HCT116 (cell line): ENCODE measurements at regions of chr1 and their contacts with region 1.

Region 1: DNA sequence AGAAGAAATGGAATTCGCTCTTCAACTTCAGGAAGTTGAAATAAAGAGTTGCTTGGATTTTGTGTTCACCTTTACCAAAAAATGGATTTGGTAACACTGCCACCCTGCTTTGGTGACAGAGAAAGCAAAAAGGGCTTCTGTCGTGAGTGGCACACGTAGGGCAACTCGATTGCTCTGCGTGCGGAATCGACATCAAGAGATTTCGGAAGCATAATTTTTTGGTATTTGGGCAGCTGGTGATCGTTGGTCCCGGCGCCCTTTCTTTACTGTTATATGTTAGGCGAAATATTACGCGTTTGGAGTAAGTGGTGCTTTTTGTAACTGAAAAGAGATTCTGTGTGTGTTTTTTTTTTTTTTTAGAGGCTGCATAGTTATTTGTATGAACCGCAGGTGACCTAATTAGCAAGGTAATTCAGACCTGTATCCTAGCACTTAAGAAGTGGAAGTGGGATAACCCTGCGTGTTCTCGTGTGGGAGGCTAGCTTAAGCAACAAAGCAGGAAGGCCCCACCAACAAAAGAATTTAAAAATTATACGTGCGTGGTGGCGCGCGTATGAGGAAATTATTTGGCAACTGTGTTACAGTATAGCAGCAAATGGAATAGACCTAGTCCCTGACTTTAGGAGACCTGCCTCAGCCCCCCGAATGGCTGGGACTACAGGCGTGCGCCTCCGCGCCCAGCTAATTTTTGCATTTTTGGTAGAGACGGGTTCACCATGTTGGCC is at the start of gene RNU11:
- DNase-seq: peak; percentile 98
- ATAC-seq: peak; percentile 74
- H3K4me3 ChIP-seq: peak within 1 kb of the TSS; percentile 31 to 51
- H3K27ac ChIP-seq: peak within 1 kb of the TSS; percentile 86
- H3K4me1 ChIP-seq: peaks cover 18 to 36% of the 10 kb centered on the region in 2 experiments
- H3K27me3 ChIP-seq: no peaks in the 10 kb centered on the region
- CTCF ChIP-seq: no peak
- POLR2A ChIP-seq: peak; percentile 100
- RAD21 ChIP-seq: no peak
- total RNA-seq, gene RNU11: not detected

Region 2: DNA sequence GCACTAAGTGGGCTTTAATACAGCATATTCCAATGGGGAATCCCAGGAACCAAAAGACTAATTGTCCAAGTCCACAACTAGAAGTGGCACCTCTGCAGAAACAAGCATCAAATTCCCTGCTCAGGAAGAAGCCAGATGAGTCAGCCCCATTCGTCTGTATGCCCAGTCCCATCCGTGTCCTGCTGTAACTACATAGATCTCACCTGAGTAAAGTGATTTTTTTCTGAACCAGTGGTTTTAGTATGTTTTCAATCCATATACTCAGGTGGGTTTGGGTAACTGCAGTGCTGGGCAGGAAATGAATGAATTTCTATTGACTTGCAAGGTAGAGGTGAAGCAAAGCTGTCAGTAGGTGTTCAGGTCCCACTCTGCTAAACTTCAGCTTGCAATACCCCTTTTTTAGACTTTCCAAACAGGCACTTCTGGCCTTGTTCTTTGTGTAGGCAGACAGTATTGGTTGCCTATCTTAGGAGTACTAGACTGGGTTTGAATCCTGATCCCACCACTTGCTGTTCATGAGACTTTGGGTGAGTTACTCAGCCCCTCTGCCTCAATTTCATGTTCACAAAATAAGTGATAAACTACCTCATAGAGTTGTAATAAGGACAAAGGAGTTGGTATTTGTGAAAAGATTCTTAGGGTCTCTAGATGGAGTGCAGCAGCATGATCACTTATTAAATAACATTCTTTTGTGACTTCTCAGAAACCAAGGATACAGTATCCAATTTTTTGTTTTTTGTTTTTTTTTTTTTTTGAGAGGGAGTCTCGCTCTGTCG is 137.8 kb before region 1 on chr1:
- CTCF ChIA-PET with region 1: no interaction called
- POLR2A ChIA-PET with region 1: interaction called, 12 read pairs
- RAD21 ChIA-PET with region 1: no interaction called
- intact Hi-C with region 1: no loop called
- DNase-seq: no peak
- ATAC-seq: peak; percentile 24
- H3K4me3 ChIP-seq: no peak overlapping the region
- H3K27ac ChIP-seq: peak overlapping the region; percentile 97
- H3K4me1 ChIP-seq: peaks cover 19 to 65% of the 10 kb centered on the region in 2 experiments
- H3K27me3 ChIP-seq: no peaks in the 10 kb centered on the region
- CTCF ChIP-seq: no peak
- POLR2A ChIP-seq: peak; percentile 69
- RAD21 ChIP-seq: no peak

Region 3: GRCh38 chr1:28668191-28668955 is 19.7 kb after region 1 on chr1 and contains the start of gene GMEB1:
- CTCF ChIA-PET with region 1: no interaction called
- POLR2A ChIA-PET with region 1: interaction called, 53 read pairs
- RAD21 ChIA-PET with region 1: interaction called in 1 of 2 experiments, 4 read pairs
- intact Hi-C with region 1: loop called (anchors 2 kb)
- DNase-seq: peak; percentile 56
- ATAC-seq: peak; percentile 83
- H3K4me3 ChIP-seq: peak within 1 kb of the TSS; percentile 81 to 91
- H3K27ac ChIP-seq: peak within 1 kb of the TSS; percentile 100
- H3K4me1 ChIP-seq: peaks cover 10 to 16% of the 10 kb centered on the region in 2 experiments
- H3K27me3 ChIP-seq: no peaks in the 10 kb centered on the region
- CTCF ChIP-seq: no peak
- POLR2A ChIP-seq: no peak
- RAD21 ChIP-seq: no peak
- total RNA-seq, gene GMEB1: 19.8 TPM

Region 4: DNA sequence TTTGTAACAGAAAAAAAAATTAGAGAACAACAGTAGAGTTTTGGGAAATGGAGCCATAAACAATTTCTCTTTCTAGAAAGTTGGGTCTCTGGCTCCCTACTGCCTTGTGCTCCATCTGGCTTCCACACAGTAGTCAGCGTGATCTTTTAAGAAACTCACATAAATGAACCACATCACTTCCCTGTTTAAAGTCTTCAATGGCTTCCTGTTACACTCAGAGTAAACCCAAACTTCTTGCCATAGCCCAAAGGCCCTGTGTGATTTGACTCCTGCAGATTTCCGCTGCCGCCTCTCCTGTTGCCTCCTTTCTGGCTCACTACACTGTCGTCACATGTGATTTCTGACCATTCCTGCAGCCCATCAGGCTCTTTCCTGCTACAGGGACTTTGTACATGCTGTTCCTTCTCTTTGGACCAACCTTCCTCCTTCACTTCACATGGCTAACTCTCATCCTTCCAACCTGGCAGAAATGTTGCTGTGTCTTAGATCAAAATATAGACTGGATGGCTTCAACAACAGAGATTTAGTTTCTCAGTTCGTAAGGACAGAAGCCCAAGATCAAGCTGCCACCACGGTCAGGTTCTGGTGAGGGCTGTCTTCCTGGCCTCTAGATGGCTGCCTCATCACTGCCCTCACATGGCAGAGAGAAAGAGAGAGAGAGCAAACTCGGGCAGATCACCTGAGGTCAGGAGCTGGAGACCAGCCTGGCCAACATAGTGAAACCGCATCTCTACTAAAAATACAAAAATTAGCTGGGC is 197.3 kb after region 1 on chr1:
- CTCF ChIA-PET with region 1: no interaction called
- POLR2A ChIA-PET with region 1: interaction called, 10 read pairs
- RAD21 ChIA-PET with region 1: no interaction called
- intact Hi-C with region 1: no loop called
- DNase-seq: peak; percentile 48
- ATAC-seq: peak; percentile 99
- H3K4me3 ChIP-seq: no peak overlapping the region
- H3K27ac ChIP-seq: 0 out of 2 replicates have a peak overlapping the region, but pooled peaks have one; percentile 3
- H3K4me1 ChIP-seq: peaks cover 2 to 11% of the 10 kb centered on the region in 2 experiments; a peak in 3 of 4 replicates
- H3K27me3 ChIP-seq: no peaks in the 10 kb centered on the region
- CTCF ChIP-seq: peak; percentile 44 to 58 (median 45); a peak in 5 of 6 replicates
- POLR2A ChIP-seq: no peak
- RAD21 ChIP-seq: peak; percentile 60